ENCODE measurements at regions of chr17 and their contacts with region 1.

Region 1: DNA sequence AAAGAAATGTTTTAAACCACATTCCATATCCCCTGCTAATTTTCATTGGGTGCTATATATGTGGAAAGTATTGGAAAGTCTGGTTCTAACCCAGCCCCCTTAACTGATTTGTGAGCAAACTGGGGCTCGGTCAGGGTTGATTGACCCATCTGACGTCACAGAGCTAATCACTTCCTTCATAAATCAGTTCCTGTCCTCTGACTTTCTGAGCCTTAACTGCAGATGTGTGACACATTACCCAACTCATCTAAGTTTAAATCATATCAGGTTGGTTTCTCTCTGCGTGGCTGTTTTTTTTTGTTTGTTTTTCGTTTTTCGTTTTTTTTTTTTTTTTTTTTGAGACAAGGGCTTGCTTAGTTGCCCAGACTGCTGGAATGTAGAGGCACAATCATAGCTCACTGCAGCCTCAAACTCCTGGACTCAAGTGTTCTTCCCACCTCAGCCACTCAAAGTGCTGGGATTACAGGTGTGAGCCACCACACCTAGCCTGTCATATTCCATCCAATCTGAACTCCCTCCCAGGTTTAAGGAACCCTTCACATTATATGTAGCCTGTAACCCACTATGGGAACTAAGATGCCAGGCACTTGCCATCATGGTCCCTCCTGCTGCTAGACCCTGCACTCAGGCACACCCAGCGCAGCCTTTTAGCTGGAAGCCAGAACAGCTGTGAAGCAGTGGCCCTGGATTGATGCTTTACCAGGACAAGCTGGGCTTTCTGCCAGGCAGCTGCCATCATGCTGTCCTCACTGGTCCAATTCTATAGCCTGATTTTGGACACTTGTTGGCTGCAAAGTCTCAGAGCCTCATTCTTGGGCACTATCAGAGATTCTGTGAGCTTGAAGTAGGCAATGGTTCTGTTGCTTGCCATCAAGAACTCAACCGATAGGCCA is 6.9 kb upstream of the BPTF start:
- DNase-seq: peak; percentile 93
- ATAC-seq: peak; percentile 60
- H3K4me3 ChIP-seq: peak overlapping the region in 2 of 5 experiments; percentile 10 to 29
- H3K4me3 Mint-ChIP-seq: peak overlapping the region; percentile 73
- H3K27ac ChIP-seq: peak overlapping the region; percentile 71 to 78
- H3K27ac Mint-ChIP-seq: peak overlapping the region; percentile 92
- H3K4me1 ChIP-seq: peaks cover 56 to 73% of the 10 kb centered on the region in 2 donors
- H3K4me1 Mint-ChIP-seq: peaks cover 65% of the 10 kb centered on the region
- H3K27me3 ChIP-seq: no peaks in the 10 kb centered on the region
- H3K27me3 Mint-ChIP-seq: no peaks in the 10 kb centered on the region
- CTCF ChIP-seq: no peak

Region 2: GRCh38 chr17:68029512-68030215 is 211.3 kb after region 1 on chr17:
- CTCF ChIA-PET with region 1: no interaction called
- POLR2A ChIA-PET with region 1: interaction called, 10 read pairs
- intact Hi-C with region 1: no loop called
- DNase-seq: no peak
- ATAC-seq: no peak
- H3K4me3 ChIP-seq: no peak overlapping the region
- H3K4me3 Mint-ChIP-seq: no peak overlapping the region
- H3K27ac ChIP-seq: no peak overlapping the region
- H3K27ac Mint-ChIP-seq: no peak overlapping the region
- H3K4me1 ChIP-seq: no peaks in the 10 kb centered on the region
- H3K4me1 Mint-ChIP-seq: no peaks in the 10 kb centered on the region
- H3K27me3 ChIP-seq: no peaks in the 10 kb centered on the region
- H3K27me3 Mint-ChIP-seq: no peaks in the 10 kb centered on the region
- CTCF ChIP-seq: no peak

Region 3: DNA sequence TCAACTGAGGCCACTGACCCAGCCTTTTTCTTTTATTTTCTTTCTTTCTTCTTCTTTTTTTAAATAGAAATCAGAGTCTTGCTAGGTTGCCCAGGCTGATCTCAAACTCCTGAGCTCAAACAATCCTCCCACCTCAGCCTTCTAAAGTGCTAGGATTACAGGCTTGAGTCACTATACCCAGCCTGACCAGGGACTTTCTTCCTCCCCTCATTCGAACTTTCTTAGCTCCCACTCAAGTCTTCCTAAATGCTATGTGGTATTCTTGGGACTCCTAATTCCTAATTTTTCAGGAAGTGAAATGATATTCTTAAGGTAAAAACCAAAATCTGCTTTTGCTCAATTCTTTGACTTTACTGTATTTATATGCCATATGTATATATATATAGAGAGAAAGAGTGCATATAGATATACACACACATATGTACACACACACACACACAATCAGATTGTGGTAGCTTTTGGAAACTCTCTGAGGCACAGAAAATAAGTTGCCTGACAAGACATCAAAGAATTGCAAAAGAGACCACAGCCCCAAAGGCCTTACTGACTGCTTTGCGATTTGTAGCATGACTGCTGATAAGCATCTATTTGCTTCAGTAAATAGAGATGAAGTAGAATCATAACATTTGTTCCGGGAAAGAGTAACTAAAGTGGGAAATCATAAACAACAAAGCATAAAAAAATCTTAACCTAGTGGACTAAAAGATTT is 420.0 kb after region 1 on chr17:
- CTCF ChIA-PET with region 1: no interaction called
- POLR2A ChIA-PET with region 1: no interaction called
- intact Hi-C with region 1: loop called (anchors 10 kb)
- DNase-seq: no peak
- ATAC-seq: no peak
- H3K4me3 ChIP-seq: peak overlapping the region; percentile 11 to 61 (median 49)
- H3K4me3 Mint-ChIP-seq: peak overlapping the region; percentile 85
- H3K27ac ChIP-seq: peak overlapping the region; percentile 99 to 100
- H3K27ac Mint-ChIP-seq: peak overlapping the region; percentile 99
- H3K4me1 ChIP-seq: peaks cover 42 to 60% of the 10 kb centered on the region in 2 donors
- H3K4me1 Mint-ChIP-seq: peaks cover 65% of the 10 kb centered on the region
- H3K27me3 ChIP-seq: no peaks in the 10 kb centered on the region
- H3K27me3 Mint-ChIP-seq: no peaks in the 10 kb centered on the region
- CTCF ChIP-seq: no peak

Measured in B cell (primary cell).